IMR-90 (cell line): ENCODE measurements at regions of chr6 and their contacts with region 1.

Region 1: DNA sequence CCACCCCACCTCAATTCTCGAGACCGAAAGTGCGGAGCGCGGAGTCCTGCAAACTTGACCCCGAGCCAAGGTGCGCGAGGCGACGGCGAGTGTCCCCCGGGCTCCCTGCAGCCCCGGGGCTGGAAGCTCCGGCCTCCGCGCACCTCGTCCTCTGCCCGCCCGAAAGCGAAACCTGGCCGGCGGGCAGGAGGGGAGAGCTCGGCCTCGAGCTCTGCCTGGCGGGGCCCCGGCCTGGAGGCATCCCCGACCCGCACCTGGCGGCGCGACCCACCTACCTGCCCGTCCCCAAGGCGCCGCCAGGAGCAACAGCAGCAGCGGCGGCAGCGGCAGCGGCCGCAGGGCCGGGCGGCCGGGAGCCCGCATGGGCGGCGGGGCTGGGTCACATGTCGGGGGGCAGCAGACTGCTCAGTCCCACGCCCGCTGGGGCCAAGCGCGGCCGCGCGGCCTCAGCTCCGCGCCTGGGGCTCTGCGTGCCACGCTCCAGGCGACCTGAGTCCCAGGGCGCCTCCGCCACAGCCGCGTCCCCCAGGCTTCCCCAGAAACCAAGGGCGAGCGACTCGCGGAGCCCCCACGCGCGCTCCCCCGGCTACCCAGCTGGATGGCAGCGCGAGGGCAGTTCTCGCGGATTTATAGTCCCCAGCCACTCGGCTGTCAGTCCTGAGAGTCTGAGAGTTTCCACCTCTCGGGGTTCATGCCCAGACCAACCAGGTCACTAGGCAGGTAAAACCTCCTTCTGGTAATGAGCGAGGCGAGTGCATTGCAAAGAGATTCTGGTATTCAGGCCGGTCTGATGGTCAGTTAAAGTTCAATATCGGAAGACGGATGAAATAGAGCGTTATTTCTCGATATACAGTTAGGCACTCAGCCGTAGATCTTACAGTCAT is at the start of gene IL20RA:
- DNase-seq: no peak
- ATAC-seq: peak; percentile 73
- H3K4me3 ChIP-seq: peak within 1 kb of the TSS; percentile 94
- H3K27ac ChIP-seq: no peak within 1 kb of the TSS
- H3K4me1 ChIP-seq: no peaks in the 10 kb centered on the region
- H3K27me3 ChIP-seq: peaks cover 41% of the 10 kb centered on the region
- CTCF ChIP-seq: no peak
- POLR2A ChIP-seq: no peak
- RAD21 ChIP-seq: no peak
- total RNA-seq, gene IL20RA: under 0.01 TPM in 1 of 2 replicates, not detected in the other

Region 2: DNA sequence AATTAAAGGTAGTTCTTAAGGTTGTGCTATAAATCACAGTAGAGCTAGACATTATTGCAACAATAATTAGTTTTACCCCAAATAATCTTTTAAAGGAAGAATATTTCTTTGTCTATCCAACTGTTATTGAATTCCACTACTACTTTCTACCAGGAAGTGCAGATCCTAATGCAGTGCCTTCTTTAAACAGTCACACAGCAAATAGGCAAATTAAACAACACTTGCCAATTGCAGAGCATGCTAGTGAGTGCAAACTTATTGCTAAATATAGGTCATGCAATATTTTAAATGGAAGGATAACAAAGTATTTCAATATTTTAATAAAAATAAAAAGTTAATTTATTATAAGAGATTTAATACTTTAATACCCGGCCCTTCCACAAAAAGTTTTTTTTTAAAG is 647.7 kb before region 1 on chr6:
- CTCF ChIA-PET with region 1: no interaction called
- POLR2A ChIA-PET with region 1: no interaction called
- dilution Hi-C with region 1: no loop called
- in situ Hi-C with region 1: no loop called
- intact Hi-C with region 1: loop called (anchors 5 kb)
- DNase-seq: no peak
- ATAC-seq: no peak
- H3K4me3 ChIP-seq: no peak overlapping the region
- H3K27ac ChIP-seq: no peak overlapping the region
- H3K4me1 ChIP-seq: peaks cover 1% of the 10 kb centered on the region; the same call in 1 of the 2 replicates
- H3K27me3 ChIP-seq: no peaks in the 10 kb centered on the region
- CTCF ChIP-seq: no peak
- POLR2A ChIP-seq: no peak
- RAD21 ChIP-seq: no peak